ENCODE measurements at regions of chr3 and their contacts with region 1.

Region 1: GRCh38 chr3:168047190-168047795 is 48.4 kb downstream of the GOLIM4 start:
- DNase-seq: no peak
- ATAC-seq: peak; percentile 74 to 81
- H3K4me3 ChIP-seq: no peak overlapping the region
- H3K27ac ChIP-seq: no peak overlapping the region
- H3K4me1 ChIP-seq: peaks cover 10% of the 10 kb centered on the region
- H3K27me3 ChIP-seq: no peaks in the 10 kb centered on the region

Region 2: DNA sequence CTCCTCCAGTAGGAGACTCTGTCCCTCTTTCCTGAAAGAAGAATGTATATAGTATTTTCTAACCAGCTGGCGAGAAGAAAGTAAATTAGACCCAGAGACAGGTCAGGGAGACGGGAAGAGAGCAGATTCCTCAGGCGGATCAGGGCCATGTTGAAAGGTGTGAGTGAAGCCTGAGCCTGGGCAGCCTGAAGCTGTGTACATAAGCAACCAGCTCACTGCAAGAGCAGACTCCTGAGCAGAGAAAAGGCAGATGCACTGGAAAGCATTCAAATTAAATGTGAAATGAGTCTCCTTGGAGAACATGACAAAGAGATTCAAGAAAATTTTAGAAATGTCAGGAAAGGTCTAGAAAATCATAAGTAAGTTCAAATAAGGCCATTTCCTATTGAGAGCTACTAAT is 117.3 kb before region 1 on chr3:
- intact Hi-C with region 1: loop called in 3 of 4 experiments (anchors 5 to 10 kb)
- DNase-seq: peak in 1 of 3 donors; percentile 25
- ATAC-seq: no peak
- H3K4me3 ChIP-seq: no peak overlapping the region
- H3K27ac ChIP-seq: no peak overlapping the region
- H3K4me1 ChIP-seq: no peaks in the 10 kb centered on the region
- H3K27me3 ChIP-seq: no peaks in the 10 kb centered on the region

Region 3: GRCh38 chr3:168095611-168096209 is 48.4 kb after region 1 on chr3 and contains the start of gene GOLIM4:
- intact Hi-C with region 1: loop called in 1 of 4 experiments (anchors 5 kb)
- DNase-seq: peak; percentile 98
- ATAC-seq: peak; percentile 98 to 99
- H3K4me3 ChIP-seq: peak within 1 kb of the TSS; percentile 64
- H3K27ac ChIP-seq: peak within 1 kb of the TSS; percentile 96
- H3K4me1 ChIP-seq: no peaks in the 10 kb centered on the region
- H3K27me3 ChIP-seq: no peaks in the 10 kb centered on the region
- total RNA-seq, gene GOLIM4: 62.3 to 73.7 (median 67.1) TPM

Region 4: GRCh38 chr3:168116279-168116678 is 69.0 kb after region 1 on chr3:
- intact Hi-C with region 1: loop called in 1 of 4 experiments (anchors 10 kb)
- DNase-seq: peak; percentile 73 to 90 (median 80)
- ATAC-seq: peak; percentile 94 to 96
- H3K4me3 ChIP-seq: no peak overlapping the region
- H3K27ac ChIP-seq: no peak overlapping the region
- H3K4me1 ChIP-seq: no peaks in the 10 kb centered on the region
- H3K27me3 ChIP-seq: no peaks in the 10 kb centered on the region

Region 5: DNA sequence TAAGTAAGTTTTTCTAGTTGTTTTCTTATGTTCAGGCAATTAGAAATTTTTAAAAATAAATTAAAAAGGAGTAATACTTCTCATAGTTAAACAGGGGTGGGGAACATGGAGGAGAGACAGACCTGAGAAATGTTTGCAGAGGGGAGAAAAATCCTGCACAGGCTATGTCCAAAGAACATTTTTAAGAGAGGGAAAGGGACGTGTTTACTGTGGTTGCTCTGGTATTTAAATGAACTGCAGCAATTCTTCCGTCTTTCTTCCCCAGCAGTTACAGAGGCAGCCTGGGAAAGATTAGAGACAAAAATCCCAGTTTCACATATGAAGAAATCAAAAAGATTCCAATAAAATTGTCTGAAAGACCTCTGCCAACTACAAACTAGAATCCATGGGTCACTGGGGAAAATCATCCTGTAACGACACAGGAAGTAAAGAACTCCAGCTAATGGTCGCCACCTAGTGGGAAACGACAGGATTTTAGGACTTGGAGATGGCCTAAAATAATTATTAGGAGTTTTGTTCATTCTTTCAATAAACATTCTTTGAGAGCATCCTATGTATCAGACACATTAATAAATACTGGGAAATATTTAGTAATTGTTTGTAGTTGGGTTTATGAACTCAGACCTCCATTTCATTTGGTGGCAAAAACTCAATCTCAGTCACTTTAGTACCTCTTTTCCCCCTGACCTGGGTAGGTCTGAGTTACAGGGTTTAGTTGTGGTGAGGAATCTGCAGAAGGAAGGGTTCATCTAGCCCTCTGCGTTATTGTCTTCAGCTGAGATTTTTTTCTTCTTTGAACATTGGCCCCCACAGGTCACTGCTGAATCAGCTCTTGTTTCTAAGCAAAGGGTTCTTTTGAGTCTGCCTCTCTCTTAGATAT is 118.3 kb after region 1 on chr3:
- intact Hi-C with region 1: loop called (anchors 1 to 2 kb)
- DNase-seq: peak in 1 of 3 donors; percentile 33
- ATAC-seq: peak; percentile 64 to 69
- H3K4me3 ChIP-seq: no peak overlapping the region
- H3K27ac ChIP-seq: no peak overlapping the region
- H3K4me1 ChIP-seq: no peaks in the 10 kb centered on the region
- H3K27me3 ChIP-seq: no peaks in the 10 kb centered on the region